ENCODE measurements at regions of chr2 and their contacts with region 1.

Region 1: GRCh38 chr2:213125646-213126347 is 25.6 kb downstream of the IKZF2 start:
- DNase-seq: peak in 1 of 2 donors; percentile 50
- ATAC-seq: peak; percentile 85 to 94 (median 91)
- H3K4me3 ChIP-seq: no peak overlapping the region
- H3K4me3 Mint-ChIP-seq: peak overlapping the region; percentile 53
- H3K27ac ChIP-seq: no peak overlapping the region
- H3K27ac Mint-ChIP-seq: peak overlapping the region; percentile 74 to 90
- H3K4me1 ChIP-seq: peaks cover 10% of the 10 kb centered on the region
- H3K4me1 Mint-ChIP-seq: peaks cover 78 to 81% of the 10 kb centered on the region in 2 donors
- H3K27me3 ChIP-seq: no peaks in the 10 kb centered on the region
- H3K27me3 Mint-ChIP-seq: no peaks in the 10 kb centered on the region
- CTCF ChIP-seq: peak; percentile 27

Region 2: GRCh38 chr2:213036836-213037235 is 89.0 kb before region 1 on chr2:
- intact Hi-C with region 1: loop called (anchors 5 kb)
- DNase-seq: no peak
- ATAC-seq: no peak
- H3K4me3 ChIP-seq: no peak overlapping the region
- H3K4me3 Mint-ChIP-seq: peak overlapping the region; percentile 83
- H3K27ac ChIP-seq: peak overlapping the region; percentile 82
- H3K27ac Mint-ChIP-seq: peak overlapping the region; percentile 25 to 94
- H3K4me1 ChIP-seq: peaks cover 24% of the 10 kb centered on the region
- H3K4me1 Mint-ChIP-seq: peaks cover 62% of the 10 kb centered on the region in 2 donors
- H3K27me3 ChIP-seq: no peaks in the 10 kb centered on the region
- H3K27me3 Mint-ChIP-seq: no peaks in the 10 kb centered on the region
- CTCF ChIP-seq: no peak

Region 3: GRCh38 chr2:213108308-213108707 is 17.5 kb before region 1 on chr2:
- intact Hi-C with region 1: no loop called
- DNase-seq: no peak
- ATAC-seq: no peak
- H3K4me3 ChIP-seq: no peak overlapping the region
- H3K4me3 Mint-ChIP-seq: no peak overlapping the region
- H3K27ac ChIP-seq: no peak overlapping the region
- H3K27ac Mint-ChIP-seq: peak overlapping the region in 1 of 2 donors; percentile 3
- H3K4me1 ChIP-seq: peaks cover 14% of the 10 kb centered on the region
- H3K4me1 Mint-ChIP-seq: peaks cover 32 to 45% of the 10 kb centered on the region in 2 donors
- H3K27me3 ChIP-seq: no peaks in the 10 kb centered on the region
- H3K27me3 Mint-ChIP-seq: no peaks in the 10 kb centered on the region
- CTCF ChIP-seq: no peak

Measured in natural killer cell (primary cell).